Transverse colon (tissue), 4 donors: ENCODE measurements at regions of chrX and their contacts with region 1.

Region 1: DNA sequence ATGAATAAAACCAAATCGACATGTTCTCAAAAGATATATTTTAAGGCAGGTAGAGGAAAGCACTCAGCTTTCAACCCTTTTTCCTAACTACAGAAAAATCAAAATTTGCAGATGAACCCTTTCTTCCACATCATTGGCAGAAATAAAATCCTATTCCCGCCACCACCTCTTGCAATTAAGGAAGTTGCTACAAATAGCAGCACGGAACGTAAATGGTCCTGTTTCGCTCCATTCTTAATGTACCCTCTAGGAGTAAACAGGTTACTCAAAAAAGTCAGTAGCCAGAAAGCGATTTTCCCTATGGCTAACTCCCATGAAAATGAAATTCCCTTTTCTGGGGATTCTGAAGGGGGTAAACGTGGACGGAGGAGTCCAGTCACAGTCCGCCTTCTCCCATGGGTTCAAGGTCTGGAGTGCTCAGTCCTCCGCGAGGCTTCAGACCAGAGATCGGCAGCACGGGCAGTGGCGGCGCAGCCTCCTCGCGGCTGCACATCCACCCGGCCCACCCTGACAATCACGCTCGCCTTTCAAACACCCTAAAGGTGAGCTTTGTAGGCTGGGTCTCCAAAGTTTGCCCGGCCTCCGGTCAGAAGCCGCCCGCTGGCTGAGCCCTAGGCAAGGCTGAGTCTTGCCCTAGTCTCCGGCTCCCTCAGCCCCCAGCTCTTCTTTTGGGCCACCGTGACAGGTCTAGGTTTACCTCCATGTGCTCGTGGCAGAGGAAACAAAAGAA is 1.8 kb downstream of the ATP11C start:
- DNase-seq: peak; percentile 24
- H3K4me3 ChIP-seq: peak overlapping the region; percentile 43 to 93 (median 77)
- H3K27ac ChIP-seq: peak overlapping the region; percentile 98
- H3K4me1 ChIP-seq: peaks cover 0 to 16% (median 2%) of the 10 kb centered on the region in 4 donors
- H3K27me3 ChIP-seq: no peaks in the 10 kb centered on the region
- CTCF ChIP-seq: no peak
- EP300 ChIP-seq: no peak
- POLR2A ChIP-seq: no peak

Region 2: DNA sequence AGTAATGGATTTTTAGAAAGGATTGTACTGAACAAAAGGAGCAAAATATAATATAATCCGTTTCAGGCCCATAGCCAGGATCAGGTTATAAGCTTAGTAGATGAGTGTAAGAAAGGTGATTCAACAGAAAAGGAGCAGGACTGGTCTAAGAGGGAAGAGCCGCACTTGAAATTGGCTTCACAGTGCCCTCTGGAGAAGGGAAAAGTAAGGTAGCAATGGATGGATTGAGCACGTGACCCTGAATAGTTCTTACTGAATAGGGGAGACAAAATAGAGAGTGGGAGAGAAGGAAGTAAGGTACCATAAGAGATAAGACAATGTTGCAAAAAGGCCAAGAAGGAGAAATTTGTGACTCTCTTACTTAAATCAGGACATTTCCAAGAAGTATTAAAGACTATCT is 18.6 kb after region 1 on chrX:
- in situ Hi-C with region 1: no loop called
- intact Hi-C with region 1: loop called (anchors 1 kb)
- DNase-seq: no peak
- H3K4me3 ChIP-seq: no peak overlapping the region
- H3K27ac ChIP-seq: no peak overlapping the region
- H3K4me1 ChIP-seq: no peaks in the 10 kb centered on the region
- H3K27me3 ChIP-seq: no peaks in the 10 kb centered on the region
- CTCF ChIP-seq: no peak
- EP300 ChIP-seq: no peak
- POLR2A ChIP-seq: no peak